ENCODE measurements at regions of chr6 and their contacts with region 1.

Region 1: DNA sequence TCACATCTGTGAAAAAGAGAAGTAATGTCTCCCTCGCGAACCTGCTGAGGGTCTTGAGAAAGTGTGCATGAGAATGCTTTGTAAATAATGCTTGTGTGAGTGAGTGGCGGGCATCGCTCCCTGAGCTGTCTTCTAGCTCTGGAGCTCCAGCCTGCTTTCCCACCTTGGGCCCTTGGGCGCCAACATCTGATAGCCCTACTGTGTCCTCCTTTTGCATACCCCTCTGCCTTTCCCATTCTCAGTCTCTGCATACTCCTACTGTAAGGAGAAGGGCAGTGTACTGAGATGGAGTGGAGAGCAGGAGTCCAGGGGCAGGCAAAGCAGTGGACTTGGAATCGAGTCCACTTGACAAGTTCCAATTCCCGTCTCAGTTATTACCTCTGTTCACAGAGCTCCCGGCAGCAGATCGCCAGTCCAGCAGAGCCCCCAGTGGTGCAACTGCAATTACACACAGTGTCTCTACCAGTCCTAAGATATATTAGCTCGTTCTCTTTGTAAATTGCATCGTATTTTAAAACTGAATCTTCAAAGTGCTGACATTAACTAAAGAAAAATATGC is 847 bp upstream of the NCR2 start:
- DNase-seq: no peak
- ATAC-seq: peak; percentile 5
- H3K4me3 Mint-ChIP-seq: no peak overlapping the region
- H3K27ac Mint-ChIP-seq: peak overlapping the region; percentile 73
- H3K4me1 Mint-ChIP-seq: peaks cover 33% of the 10 kb centered on the region
- H3K27me3 Mint-ChIP-seq: no peaks in the 10 kb centered on the region

Region 2: DNA sequence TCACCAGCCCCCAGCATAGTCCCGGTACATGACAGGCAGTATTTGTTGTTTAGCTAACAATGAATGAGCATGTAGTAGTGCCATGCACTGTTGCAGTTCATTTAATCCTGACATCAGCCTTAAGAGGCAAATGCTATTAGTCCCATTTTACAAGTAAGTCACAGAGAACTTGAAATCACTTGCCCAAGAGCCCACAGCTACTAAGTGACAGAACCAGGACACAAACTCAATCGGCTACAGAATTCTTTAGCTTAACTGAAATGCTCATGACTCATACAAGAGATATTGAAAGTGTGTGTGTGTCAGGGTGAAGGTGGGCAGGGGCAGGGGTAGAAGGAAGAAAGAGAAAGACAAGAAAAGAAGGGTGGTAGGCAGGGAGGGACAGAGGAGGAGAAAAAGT is 348.2 kb before region 1 on chr6:
- CTCF ChIA-PET with region 1: no interaction called
- POLR2A ChIA-PET with region 1: interaction called, 10 read pairs
- intact Hi-C with region 1: no loop called
- DNase-seq: no peak
- ATAC-seq: no peak
- H3K4me3 Mint-ChIP-seq: no peak overlapping the region
- H3K27ac Mint-ChIP-seq: no peak overlapping the region
- H3K4me1 Mint-ChIP-seq: no peaks in the 10 kb centered on the region
- H3K27me3 Mint-ChIP-seq: peaks cover 35% of the 10 kb centered on the region

Region 3: GRCh38 chr6:41306187-41306854 is 28.2 kb before region 1 on chr6:
- CTCF ChIA-PET with region 1: interaction called, 27 read pairs
- POLR2A ChIA-PET with region 1: interaction called, 3 read pairs
- intact Hi-C with region 1: no loop called
- DNase-seq: peak; percentile 59
- ATAC-seq: no peak
- H3K4me3 Mint-ChIP-seq: no peak overlapping the region
- H3K27ac Mint-ChIP-seq: no peak overlapping the region
- H3K4me1 Mint-ChIP-seq: peaks cover 9% of the 10 kb centered on the region
- H3K27me3 Mint-ChIP-seq: no peaks in the 10 kb centered on the region

Region 4: GRCh38 chr6:41356790-41357189 is 22.2 kb after region 1 on chr6:
- CTCF ChIA-PET with region 1: no interaction called
- POLR2A ChIA-PET with region 1: no interaction called
- intact Hi-C with region 1: no loop called
- DNase-seq: no peak
- ATAC-seq: no peak
- H3K4me3 Mint-ChIP-seq: no peak overlapping the region
- H3K27ac Mint-ChIP-seq: no peak overlapping the region
- H3K4me1 Mint-ChIP-seq: no peaks in the 10 kb centered on the region
- H3K27me3 Mint-ChIP-seq: peaks cover 6% of the 10 kb centered on the region

Region 5: DNA sequence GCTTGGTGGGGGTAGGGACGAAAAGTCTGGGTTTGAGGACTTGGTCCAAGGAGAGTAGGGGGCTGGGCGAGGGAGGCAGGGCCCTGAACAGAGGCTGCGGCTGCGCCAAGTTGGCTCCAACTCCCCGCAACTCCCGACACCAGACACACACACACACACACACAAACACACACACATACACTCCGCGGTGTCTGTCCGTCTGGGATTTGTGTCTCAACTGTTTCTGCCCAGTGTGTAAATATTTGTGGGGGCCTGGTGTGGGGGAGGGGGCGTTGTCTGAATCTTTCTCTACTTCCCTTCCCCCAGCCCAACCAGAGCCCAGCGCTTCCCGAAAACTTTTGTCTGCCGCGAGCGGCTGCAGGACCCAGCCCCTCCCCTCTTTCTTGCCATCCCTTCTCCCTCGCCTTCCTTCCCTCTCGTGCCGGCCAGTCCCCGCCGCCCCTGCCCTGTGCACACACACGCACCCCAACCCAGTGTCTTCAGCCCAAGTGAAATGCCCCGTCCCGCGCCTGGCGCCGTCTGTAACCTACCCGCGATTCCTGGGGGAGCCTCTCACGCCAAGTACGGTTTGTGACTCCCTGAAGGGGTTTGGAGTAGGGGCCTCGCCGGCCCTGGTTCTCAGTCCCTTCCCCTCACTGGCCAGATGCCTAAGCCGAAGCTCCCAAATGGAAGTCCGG is 304.5 kb after region 1 on chr6:
- CTCF ChIA-PET with region 1: no interaction called
- POLR2A ChIA-PET with region 1: no interaction called
- intact Hi-C with region 1: no loop called
- DNase-seq: no peak
- ATAC-seq: no peak
- H3K4me3 Mint-ChIP-seq: no peak overlapping the region
- H3K27ac Mint-ChIP-seq: no peak overlapping the region
- H3K4me1 Mint-ChIP-seq: peaks cover 6% of the 10 kb centered on the region
- H3K27me3 Mint-ChIP-seq: peaks cover 43% of the 10 kb centered on the region

Measured in activated CD4-positive, alpha-beta T cell treated with anti-CD3 and anti-CD28 coated beads for 36 hours (primary cell).